H1 (cell line): ENCODE measurements at regions of chr15 and their contacts with region 1.

Region 1: GRCh38 chr15:61051569-61052031 is 177.5 kb downstream of the RORA start:
- DNase-seq: peak in 1 of 2 experiments; percentile 15
- H3K4me3 ChIP-seq: no peak overlapping the region
- H3K27ac ChIP-seq: no peak overlapping the region
- H3K4me1 ChIP-seq: peaks cover 2 to 14% (median 7%) of the 10 kb centered on the region in 4 experiments; a peak in 4 of 7 replicates
- H3K27me3 ChIP-seq: no peaks in the 10 kb centered on the region
- CTCF ChIP-seq: peak; percentile 60 to 72 (median 67)
- EP300 ChIP-seq: no peak
- POLR2A ChIP-seq: no peak
- RAD21 ChIP-seq: peak; percentile 82 to 83

Region 2: GRCh38 chr15:60964527-60964926 is 87.1 kb before region 1 on chr15:
- CTCF ChIA-PET with region 1: no interaction called
- POLR2A ChIA-PET with region 1: no interaction called
- DNase-seq: no peak
- H3K4me3 ChIP-seq: no peak overlapping the region
- H3K27ac ChIP-seq: no peak overlapping the region
- H3K4me1 ChIP-seq: no peaks in the 10 kb centered on the region; a peak in 2 of 7 replicates
- H3K27me3 ChIP-seq: no peaks in the 10 kb centered on the region
- CTCF ChIP-seq: peak in 1 of 3 experiments; percentile 34; a peak in 1 of 4 replicates
- EP300 ChIP-seq: no peak
- POLR2A ChIP-seq: no peak
- RAD21 ChIP-seq: peak in 1 of 2 experiments; percentile 27; a peak in 1 of 4 replicates

Region 3: GRCh38 chr15:61034678-61035291 is 16.8 kb before region 1 on chr15:
- CTCF ChIA-PET with region 1: interaction called, 17 read pairs
- POLR2A ChIA-PET with region 1: no interaction called
- DNase-seq: no peak
- H3K4me3 ChIP-seq: no peak overlapping the region
- H3K27ac ChIP-seq: no peak overlapping the region
- H3K4me1 ChIP-seq: peaks cover 0 to 6% (median 0%) of the 10 kb centered on the region in 4 experiments; a peak in 1 of 7 replicates
- H3K27me3 ChIP-seq: no peaks in the 10 kb centered on the region
- CTCF ChIP-seq: no peak
- EP300 ChIP-seq: no peak
- POLR2A ChIP-seq: no peak
- RAD21 ChIP-seq: no peak